ENCODE measurements at regions of chr12 and their contacts with region 1.

Region 1: GRCh38 chr12:51217968-51218606 is at the start of gene POU6F1:
- DNase-seq: peak; percentile 80
- ATAC-seq: peak; percentile 80
- H3K4me3 Mint-ChIP-seq: peak within 1 kb of the TSS; percentile 91
- H3K27ac Mint-ChIP-seq: peak within 1 kb of the TSS; percentile 95
- H3K4me1 Mint-ChIP-seq: peaks cover 17% of the 10 kb centered on the region
- H3K27me3 Mint-ChIP-seq: no peaks in the 10 kb centered on the region
- total RNA-seq, gene POU6F1: 8.7 to 12.9 TPM

Region 2: GRCh38 chr12:51047655-51048540 is 170.2 kb before region 1 on chr12 and contains the start of gene LETMD1:
- CTCF ChIA-PET with region 1: no interaction called
- POLR2A ChIA-PET with region 1: no interaction called
- intact Hi-C with region 1: loop called in 1 of 2 experiments (anchors 1 kb)
- DNase-seq: peak; percentile 94
- ATAC-seq: peak; percentile 98
- H3K4me3 Mint-ChIP-seq: peak within 1 kb of the TSS; percentile 92
- H3K27ac Mint-ChIP-seq: peak within 1 kb of the TSS; percentile 92
- H3K4me1 Mint-ChIP-seq: peaks cover 23% of the 10 kb centered on the region
- H3K27me3 Mint-ChIP-seq: no peaks in the 10 kb centered on the region
- total RNA-seq, gene LETMD1: 69.6 to 79.6 TPM

Region 3: DNA sequence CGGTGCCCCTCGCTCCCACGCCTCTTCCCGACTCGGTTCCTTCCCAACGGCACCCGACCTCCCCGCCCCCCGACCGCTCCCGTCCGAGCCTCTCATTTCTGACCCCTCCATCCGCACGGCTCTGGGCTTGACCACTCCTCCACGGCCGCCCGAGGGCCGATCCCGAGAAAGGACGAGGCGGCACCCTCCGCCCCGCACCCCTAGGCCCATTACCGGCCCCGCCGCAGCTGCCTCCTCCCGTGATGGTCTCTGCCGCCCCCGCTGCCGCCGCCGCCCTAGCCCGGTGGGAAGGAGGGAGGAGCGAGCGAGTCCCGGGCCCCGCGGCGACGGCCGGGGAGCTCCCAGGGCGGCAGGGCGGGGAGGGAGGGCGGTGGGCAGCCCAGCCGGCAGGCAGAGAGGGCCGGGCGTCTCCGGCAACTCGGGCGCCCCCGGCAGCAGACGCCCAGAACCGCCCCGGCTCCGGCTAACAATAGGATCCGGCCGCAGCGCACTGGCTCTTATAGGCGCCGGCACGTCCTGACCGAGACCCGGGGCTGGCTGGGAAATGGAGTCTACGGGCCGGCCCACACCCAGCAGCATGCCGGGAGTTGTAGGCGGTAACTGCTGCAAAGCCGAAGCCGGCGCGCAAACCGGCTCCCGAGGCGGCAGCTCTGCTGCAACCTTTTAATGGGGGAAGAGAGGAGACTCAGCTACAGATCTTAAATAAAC is 134.8 kb before region 1 on chr12 and contains the start of gene CSRNP2:
- CTCF ChIA-PET with region 1: interaction called, 4 read pairs
- POLR2A ChIA-PET with region 1: no interaction called
- intact Hi-C with region 1: loop called in 1 of 2 experiments (anchors 1 kb)
- DNase-seq: peak; percentile 97
- ATAC-seq: peak; percentile 99
- H3K4me3 Mint-ChIP-seq: peak within 1 kb of the TSS; percentile 95
- H3K27ac Mint-ChIP-seq: peak within 1 kb of the TSS; percentile 86
- H3K4me1 Mint-ChIP-seq: peaks cover 46% of the 10 kb centered on the region
- H3K27me3 Mint-ChIP-seq: no peaks in the 10 kb centered on the region
- total RNA-seq, gene CSRNP2: 12.8 to 13.6 TPM

Region 4: GRCh38 chr12:51103977-51104376 is 114.1 kb before region 1 on chr12:
- CTCF ChIA-PET with region 1: no interaction called
- POLR2A ChIA-PET with region 1: interaction called, 10 read pairs
- intact Hi-C with region 1: no loop called
- DNase-seq: peak; percentile 40
- ATAC-seq: peak; percentile 80
- H3K4me3 Mint-ChIP-seq: no peak overlapping the region
- H3K27ac Mint-ChIP-seq: peak overlapping the region; percentile 4
- H3K4me1 Mint-ChIP-seq: peaks cover 5% of the 10 kb centered on the region
- H3K27me3 Mint-ChIP-seq: no peaks in the 10 kb centered on the region

Region 5: DNA sequence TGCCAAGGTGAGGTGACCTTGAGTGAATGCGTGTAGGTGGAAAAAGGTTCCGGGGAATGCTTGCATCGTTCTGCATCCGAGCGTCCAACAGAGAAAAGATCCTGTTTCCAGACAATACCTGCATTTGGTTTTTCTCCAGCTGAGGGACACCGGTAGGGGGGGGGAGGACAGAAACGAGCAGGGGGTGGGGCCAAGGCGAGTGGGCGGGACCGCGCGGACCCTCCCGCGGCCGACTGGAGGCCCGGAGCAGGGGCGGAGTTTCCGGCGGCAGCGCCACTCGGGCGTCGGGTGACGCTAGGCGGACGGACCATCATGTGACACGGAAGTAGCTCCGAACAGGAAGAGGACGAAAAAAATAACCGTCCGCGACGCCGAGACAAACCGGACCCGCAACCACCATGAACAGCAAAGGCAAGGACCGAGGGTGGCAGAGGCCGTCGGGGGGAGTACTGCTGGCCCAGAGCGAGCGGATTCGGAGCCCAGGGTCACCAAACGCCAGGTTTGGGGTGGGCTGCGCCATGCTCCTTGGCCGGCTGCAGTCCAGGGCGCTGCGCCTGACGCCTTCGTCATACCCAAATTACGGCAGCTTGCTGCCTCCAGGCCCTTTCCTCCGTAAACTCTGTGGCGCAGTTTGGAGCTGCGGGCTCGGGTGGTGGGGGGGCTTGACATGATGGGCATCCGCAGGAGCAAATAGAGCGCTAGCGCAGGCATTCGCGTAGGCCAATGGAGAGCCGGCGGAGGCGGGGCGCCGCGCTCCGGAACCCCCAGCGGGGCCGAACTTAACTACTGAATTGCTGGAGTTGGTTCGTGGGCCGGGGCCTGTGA is 20.6 kb after region 1 on chr12 and contains the start of gene DAZAP2:
- CTCF ChIA-PET with region 1: interaction called, 14 read pairs
- POLR2A ChIA-PET with region 1: interaction called, 23 read pairs
- intact Hi-C with region 1: loop called (anchors 1 kb)
- DNase-seq: peak; percentile 98
- ATAC-seq: peak; percentile 92
- H3K4me3 Mint-ChIP-seq: peak within 1 kb of the TSS; percentile 87
- H3K27ac Mint-ChIP-seq: peak within 1 kb of the TSS; percentile 100
- H3K4me1 Mint-ChIP-seq: peaks cover 36% of the 10 kb centered on the region
- H3K27me3 Mint-ChIP-seq: no peaks in the 10 kb centered on the region
- total RNA-seq, gene DAZAP2: 94.8 to 95.2 TPM

Region 6: DNA sequence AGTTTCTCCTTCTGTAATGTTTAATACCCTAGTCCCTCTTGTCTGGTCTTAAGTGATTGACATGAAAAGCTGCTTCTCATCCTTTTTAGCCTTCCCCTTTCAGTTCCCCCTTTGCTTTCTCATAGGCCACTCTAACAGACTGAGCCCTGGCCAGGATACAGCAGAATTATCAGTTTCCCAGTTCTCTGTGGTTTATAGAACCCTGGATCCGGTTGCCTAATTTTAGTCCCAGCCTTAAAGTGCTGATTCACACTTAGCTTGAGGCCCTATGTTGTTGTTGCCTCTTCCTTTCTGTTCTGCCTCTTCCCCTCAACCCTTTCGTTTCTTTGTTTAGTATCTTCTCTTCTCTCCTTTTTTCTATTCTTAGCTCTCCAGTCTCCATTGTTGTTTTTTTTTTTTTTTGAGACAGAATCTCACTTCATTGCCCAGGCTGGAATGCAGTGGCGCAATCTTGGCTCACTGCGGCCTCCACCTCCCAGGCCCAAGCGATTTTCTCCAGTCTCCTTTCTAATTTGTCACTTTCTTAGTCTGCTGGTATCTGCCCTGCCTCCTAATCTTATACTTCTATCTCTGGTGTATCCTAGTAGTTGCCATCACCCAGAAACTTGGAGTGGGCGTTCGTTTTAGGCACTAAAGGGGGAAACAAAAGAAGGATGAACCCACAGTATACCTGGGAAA is 108.8 kb after region 1 on chr12:
- CTCF ChIA-PET with region 1: interaction called, 7 read pairs
- POLR2A ChIA-PET with region 1: no interaction called
- intact Hi-C with region 1: loop called in 1 of 2 experiments (anchors 2 kb)
- DNase-seq: no peak
- ATAC-seq: peak; percentile 18
- H3K4me3 Mint-ChIP-seq: peak overlapping the region; percentile 49
- H3K27ac Mint-ChIP-seq: peak overlapping the region; percentile 88
- H3K4me1 Mint-ChIP-seq: peaks cover 68% of the 10 kb centered on the region
- H3K27me3 Mint-ChIP-seq: no peaks in the 10 kb centered on the region

Region 7: GRCh38 chr12:51351913-51352532 is 133.9 kb after region 1 on chr12:
- CTCF ChIA-PET with region 1: no interaction called
- POLR2A ChIA-PET with region 1: no interaction called
- intact Hi-C with region 1: no loop called
- DNase-seq: peak; percentile 68
- ATAC-seq: peak; percentile 79
- H3K4me3 Mint-ChIP-seq: no peak overlapping the region
- H3K27ac Mint-ChIP-seq: no peak overlapping the region
- H3K4me1 Mint-ChIP-seq: peaks cover under 1% of the 10 kb centered on the region
- H3K27me3 Mint-ChIP-seq: no peaks in the 10 kb centered on the region